ENCODE measurements at regions of chr1 and their contacts with region 1.

Region 1: DNA sequence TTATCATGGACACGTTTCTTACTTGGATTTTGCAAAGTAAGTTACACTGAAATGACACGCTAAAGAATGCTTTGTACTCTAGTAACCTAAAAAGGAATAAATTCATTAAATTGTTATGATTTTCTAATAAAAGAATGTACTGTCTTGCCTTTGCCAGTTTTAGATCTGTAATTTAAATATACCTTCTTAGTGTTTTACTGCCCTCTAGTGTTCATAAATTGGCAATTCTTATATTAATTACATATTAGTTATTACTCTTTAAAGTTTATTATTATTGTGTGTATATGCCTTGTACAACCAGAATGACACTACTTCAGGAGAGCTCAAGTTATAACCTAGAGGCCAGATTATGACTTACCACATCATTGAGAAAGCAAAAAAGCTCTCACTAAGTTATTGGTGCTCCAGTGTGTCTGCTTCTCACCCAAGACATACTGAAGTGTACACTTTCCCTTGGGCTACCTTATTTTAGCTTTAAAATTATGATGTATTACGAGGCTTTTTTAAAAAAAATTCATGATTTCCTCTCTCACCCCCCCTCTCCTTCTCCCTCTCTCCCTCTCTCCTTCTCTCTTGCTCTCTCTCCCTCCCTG is 169.9 kb downstream of the HS2ST1 start:
- DNase-seq: no peak
- ATAC-seq: no peak
- H3K4me3 ChIP-seq: no peak overlapping the region
- H3K27ac ChIP-seq: no peak overlapping the region
- H3K4me1 ChIP-seq: no peaks in the 10 kb centered on the region
- H3K27me3 ChIP-seq: no peaks in the 10 kb centered on the region

Region 2: DNA sequence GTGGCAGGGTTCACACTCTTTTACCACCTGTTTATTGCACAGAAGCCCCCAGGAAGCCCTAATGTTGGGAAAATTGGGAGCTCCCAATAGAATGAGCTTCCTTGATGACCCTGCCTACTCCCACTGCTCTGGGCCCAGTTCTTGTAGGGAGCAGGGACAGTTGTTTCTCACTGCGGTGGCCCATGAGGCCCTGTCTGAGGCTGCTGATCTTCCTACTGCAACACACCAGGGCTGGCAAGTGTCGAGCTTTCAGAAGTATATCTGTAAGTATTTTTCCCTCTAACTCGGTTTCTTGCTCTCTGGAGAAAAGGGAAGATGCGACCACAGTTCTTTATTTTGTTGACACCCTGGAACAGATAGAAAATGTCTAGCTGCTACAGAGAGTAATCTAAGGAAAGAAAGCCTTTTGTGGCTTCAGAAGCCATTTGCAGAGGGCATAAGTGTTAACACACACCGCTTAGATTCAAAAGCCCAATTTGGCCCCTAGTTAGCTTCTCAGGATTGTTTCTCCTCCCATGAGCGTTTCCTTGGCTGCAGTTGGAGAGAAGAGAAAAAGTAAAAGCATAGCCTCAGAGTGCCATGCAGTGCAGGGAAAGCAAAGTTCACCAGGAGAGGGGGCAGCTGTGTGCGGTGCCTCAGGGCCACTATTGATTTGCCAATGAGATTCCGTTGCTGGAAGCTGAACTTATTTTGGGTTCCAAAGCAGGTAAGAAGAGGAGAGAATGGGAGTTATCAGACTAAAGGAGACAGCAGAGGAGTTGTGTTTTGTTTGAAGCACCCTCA is 273.0 kb before region 1 on chr1:
- intact Hi-C with region 1: no loop called
- DNase-seq: no peak
- ATAC-seq: no peak
- H3K4me3 ChIP-seq: no peak overlapping the region
- H3K27ac ChIP-seq: no peak overlapping the region
- H3K4me1 ChIP-seq: no peaks in the 10 kb centered on the region
- H3K27me3 ChIP-seq: no peaks in the 10 kb centered on the region

Region 3: DNA sequence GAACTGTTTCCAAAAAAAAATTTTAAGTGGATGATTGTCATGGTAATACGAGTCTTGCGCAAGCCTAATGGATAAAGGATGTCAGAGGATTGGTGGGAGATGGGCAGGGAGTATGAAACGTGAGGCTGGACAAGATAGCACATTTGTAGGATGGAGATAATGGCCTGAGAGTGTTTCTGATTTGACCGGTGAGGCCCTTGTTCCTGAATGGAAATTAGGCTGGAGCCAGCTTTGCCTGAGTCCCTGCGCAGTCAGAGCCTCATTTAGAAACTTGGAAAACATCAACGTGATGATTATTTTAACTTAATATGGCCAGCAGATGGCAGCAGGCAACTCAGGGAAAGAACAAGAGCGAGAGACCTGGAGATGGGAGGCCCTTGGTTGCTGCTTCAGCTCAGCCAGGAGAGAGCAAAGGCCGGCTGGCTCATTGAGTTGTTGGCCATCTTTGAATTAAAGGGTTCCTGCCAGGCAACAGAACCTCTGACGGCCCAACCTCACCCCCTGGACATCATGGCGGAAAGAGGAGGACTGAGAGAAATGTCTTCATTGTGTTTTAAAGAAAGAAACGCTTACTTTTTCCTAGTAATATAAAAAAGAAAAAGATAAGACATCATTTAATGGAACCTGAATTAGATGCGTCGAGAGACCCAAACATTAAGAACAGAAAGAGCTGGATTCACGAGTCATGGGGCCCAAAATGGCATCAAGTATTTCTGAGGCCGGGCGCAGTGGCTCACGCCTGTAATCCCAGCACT is 250.7 kb before region 1 on chr1:
- intact Hi-C with region 1: loop called in 3 of 4 experiments (anchors 5 kb)
- DNase-seq: peak; percentile 73 to 81 (median 73)
- ATAC-seq: peak; percentile 88 to 91
- H3K4me3 ChIP-seq: no peak overlapping the region
- H3K27ac ChIP-seq: no peak overlapping the region
- H3K4me1 ChIP-seq: no peaks in the 10 kb centered on the region
- H3K27me3 ChIP-seq: no peaks in the 10 kb centered on the region

Region 4: GRCh38 chr1:86948212-86948611 is 136.1 kb before region 1 on chr1:
- intact Hi-C with region 1: no loop called
- DNase-seq: peak; percentile 27 to 77 (median 50)
- ATAC-seq: peak; percentile 78 to 92
- H3K4me3 ChIP-seq: no peak overlapping the region
- H3K27ac ChIP-seq: no peak overlapping the region
- H3K4me1 ChIP-seq: peaks cover 1% of the 10 kb centered on the region
- H3K27me3 ChIP-seq: no peaks in the 10 kb centered on the region

Region 5: DNA sequence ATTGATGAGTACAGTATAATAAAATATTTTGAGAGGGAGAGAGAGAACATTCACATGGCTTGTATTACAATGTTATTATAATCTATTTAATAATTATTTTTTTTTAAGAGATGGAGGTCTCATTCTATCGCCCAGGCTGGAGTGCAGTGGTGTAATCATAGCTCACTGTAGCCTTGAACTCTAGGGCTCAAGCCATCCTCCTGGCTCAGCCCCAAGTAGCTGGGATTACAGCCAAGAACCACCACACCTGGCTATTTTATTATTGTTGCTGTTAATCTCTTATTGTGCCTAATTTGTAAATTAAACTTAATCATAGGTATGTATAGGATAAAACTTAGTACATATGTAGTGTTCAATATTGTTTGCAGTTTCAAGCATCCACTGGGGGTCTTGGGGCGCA is 112.1 kb before region 1 on chr1:
- intact Hi-C with region 1: loop called in 1 of 4 experiments (anchors 5 kb)
- DNase-seq: peak in 1 of 3 donors; percentile 38
- ATAC-seq: no peak
- H3K4me3 ChIP-seq: no peak overlapping the region
- H3K27ac ChIP-seq: no peak overlapping the region
- H3K4me1 ChIP-seq: no peaks in the 10 kb centered on the region
- H3K27me3 ChIP-seq: no peaks in the 10 kb centered on the region

Region 6: DNA sequence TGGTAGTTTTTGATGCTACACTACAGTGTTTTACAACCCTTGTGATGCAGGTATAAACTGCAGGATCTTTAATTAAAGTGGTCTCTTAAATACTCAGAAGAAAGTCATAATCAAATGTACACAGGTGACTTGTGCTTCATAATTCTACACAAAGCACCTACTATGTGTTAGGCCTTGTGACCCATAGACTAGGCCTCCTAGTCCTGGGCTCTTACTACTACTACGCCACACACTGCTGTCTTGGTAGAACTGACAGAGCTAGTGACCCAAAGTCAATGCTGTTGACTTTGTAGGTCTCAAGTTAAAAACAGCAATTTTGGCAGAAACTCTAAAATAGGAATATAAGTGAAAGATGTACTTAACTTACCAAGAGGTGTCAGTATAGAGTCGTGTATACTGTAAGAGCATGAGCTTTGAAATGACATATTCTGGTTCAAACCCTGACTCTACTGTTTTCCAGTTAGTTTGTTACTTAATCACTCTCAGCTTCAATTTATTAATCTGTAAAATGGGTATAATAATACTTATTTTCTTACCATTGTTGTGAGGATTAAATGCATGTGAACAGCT is 195.7 kb after region 1 on chr1:
- intact Hi-C with region 1: no loop called
- DNase-seq: no peak
- ATAC-seq: no peak
- H3K4me3 ChIP-seq: no peak overlapping the region
- H3K27ac ChIP-seq: peak overlapping the region; percentile 57
- H3K4me1 ChIP-seq: no peaks in the 10 kb centered on the region
- H3K27me3 ChIP-seq: no peaks in the 10 kb centered on the region

Measured in right cardiac atrium (tissue), 5 donors.